A673 (cell line): ENCODE measurements at regions of chr3 and their contacts with region 1.

Region 1: GRCh38 chr3:15797642-15798303 is at the start of gene ANKRD28:
- DNase-seq: peak; percentile 75
- H3K4me3 ChIP-seq: peak within 1 kb of the TSS; percentile 42
- H3K27ac ChIP-seq: peak within 1 kb of the TSS; percentile 66
- H3K4me1 ChIP-seq: peaks cover 30% of the 10 kb centered on the region
- H3K27me3 ChIP-seq: no peaks in the 10 kb centered on the region
- CTCF ChIP-seq: peak; percentile 43; the same call in 1 of the 2 replicates
- total RNA-seq, gene ANKRD28: 29.9 and 36.9 TPM in 2 replicates

Region 2: DNA sequence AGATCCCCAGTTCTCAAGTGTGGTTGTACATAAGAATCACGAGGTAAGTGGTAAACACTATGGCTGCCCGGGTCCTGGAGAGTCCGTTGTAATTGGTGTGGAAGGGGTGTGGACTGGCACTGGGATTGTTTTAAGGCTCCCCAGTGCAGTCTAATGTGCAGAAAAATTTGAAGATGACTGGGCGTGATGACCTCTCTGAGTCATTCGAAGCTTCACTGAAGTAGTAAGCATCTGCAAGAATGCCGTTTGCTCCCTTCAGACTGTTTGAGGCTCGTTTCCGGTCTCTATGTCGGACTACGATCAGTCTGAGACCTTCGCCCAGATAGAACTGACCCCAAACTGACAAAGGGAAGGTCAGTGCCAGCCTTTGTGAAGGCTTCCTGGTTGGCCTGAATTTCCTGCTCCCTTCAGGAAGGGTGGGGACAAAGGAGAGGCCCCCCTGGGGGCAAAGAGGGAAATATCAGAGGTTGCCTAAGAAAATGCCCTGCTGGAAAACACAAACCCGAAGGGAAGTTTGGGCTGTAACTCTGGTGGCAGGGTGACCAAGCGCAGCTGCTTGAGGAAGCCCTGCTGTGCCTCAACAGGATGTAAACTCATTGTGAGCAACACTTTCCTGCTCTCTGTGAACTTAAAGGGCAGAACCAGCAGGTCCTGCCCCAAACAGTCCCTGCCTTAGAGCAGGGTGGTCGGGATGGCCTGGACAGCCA is 161.6 kb before region 1 on chr3:
- CTCF ChIA-PET with region 1: no interaction called
- POLR2A ChIA-PET with region 1: no interaction called
- intact Hi-C with region 1: loop called (anchors 5 kb)
- DNase-seq: peak; percentile 49
- H3K4me3 ChIP-seq: no peak overlapping the region
- H3K27ac ChIP-seq: peak overlapping the region; percentile 29
- H3K4me1 ChIP-seq: peaks cover 27% of the 10 kb centered on the region
- H3K27me3 ChIP-seq: no peaks in the 10 kb centered on the region
- CTCF ChIP-seq: no peak

Region 3: GRCh38 chr3:15722877-15723620 is 74.7 kb before region 1 on chr3:
- CTCF ChIA-PET with region 1: no interaction called
- POLR2A ChIA-PET with region 1: interaction called, 13 read pairs
- intact Hi-C with region 1: no loop called
- DNase-seq: no peak
- H3K4me3 ChIP-seq: no peak overlapping the region
- H3K27ac ChIP-seq: no peak overlapping the region
- H3K4me1 ChIP-seq: no peaks in the 10 kb centered on the region
- H3K27me3 ChIP-seq: no peaks in the 10 kb centered on the region
- CTCF ChIP-seq: no peak

Region 4: DNA sequence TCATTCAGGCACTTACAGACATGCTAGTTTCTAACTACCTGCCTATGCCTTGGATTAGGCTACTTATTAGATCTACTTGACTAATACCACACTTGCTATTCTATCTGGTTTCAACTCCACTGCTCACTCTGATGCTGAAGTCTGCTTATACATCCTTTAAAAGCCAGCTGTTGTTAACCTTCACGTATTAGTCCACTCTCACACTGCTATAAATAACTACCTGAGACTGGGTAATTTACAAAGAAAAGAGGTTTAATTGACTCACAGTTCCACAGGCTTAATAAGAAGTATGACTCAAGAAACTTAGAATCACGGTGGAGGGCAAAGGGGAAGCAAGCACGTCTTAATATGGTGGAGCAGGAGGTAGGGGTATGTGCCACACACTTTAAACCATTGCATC is 47.7 kb after region 1 on chr3:
- CTCF ChIA-PET with region 1: no interaction called
- POLR2A ChIA-PET with region 1: no interaction called
- intact Hi-C with region 1: no loop called
- DNase-seq: no peak
- H3K4me3 ChIP-seq: no peak overlapping the region
- H3K27ac ChIP-seq: no peak overlapping the region
- H3K4me1 ChIP-seq: no peaks in the 10 kb centered on the region
- H3K27me3 ChIP-seq: no peaks in the 10 kb centered on the region
- CTCF ChIP-seq: no peak

Region 5: GRCh38 chr3:15933439-15934139 is 135.8 kb after region 1 on chr3:
- CTCF ChIA-PET with region 1: no interaction called
- POLR2A ChIA-PET with region 1: no interaction called
- intact Hi-C with region 1: no loop called
- DNase-seq: no peak
- H3K4me3 ChIP-seq: no peak overlapping the region
- H3K27ac ChIP-seq: no peak overlapping the region
- H3K4me1 ChIP-seq: no peaks in the 10 kb centered on the region
- H3K27me3 ChIP-seq: no peaks in the 10 kb centered on the region
- CTCF ChIP-seq: no peak

Region 6: GRCh38 chr3:16004812-16005211 is 207.0 kb after region 1 on chr3:
- CTCF ChIA-PET with region 1: no interaction called
- POLR2A ChIA-PET with region 1: no interaction called
- intact Hi-C with region 1: no loop called
- DNase-seq: no peak
- H3K4me3 ChIP-seq: no peak overlapping the region
- H3K27ac ChIP-seq: no peak overlapping the region
- H3K4me1 ChIP-seq: no peaks in the 10 kb centered on the region
- H3K27me3 ChIP-seq: no peaks in the 10 kb centered on the region
- CTCF ChIP-seq: no peak